ENCODE measurements at regions of chr10 and their contacts with region 1.

Region 1: GRCh38 chr10:21696302-21696701 is 162.3 kb downstream of the MLLT10 start:
- DNase-seq: no peak
- H3K4me3 ChIP-seq: no peak overlapping the region
- H3K4me3 Mint-ChIP-seq: no peak overlapping the region
- H3K27ac Mint-ChIP-seq: no peak overlapping the region
- H3K4me1 ChIP-seq: no peaks in the 10 kb centered on the region
- H3K4me1 Mint-ChIP-seq: no peaks in the 10 kb centered on the region
- H3K27me3 ChIP-seq: no peaks in the 10 kb centered on the region
- H3K27me3 Mint-ChIP-seq: no peaks in the 10 kb centered on the region
- CTCF ChIP-seq: no peak

Region 2: GRCh38 chr10:21776883-21777282 is 80.6 kb after region 1 on chr10:
- CTCF ChIA-PET with region 1: no interaction called
- POLR2A ChIA-PET with region 1: interaction called, 16 read pairs
- intact Hi-C with region 1: no loop called
- DNase-seq: no peak
- H3K4me3 ChIP-seq: no peak overlapping the region
- H3K4me3 Mint-ChIP-seq: no peak overlapping the region
- H3K27ac Mint-ChIP-seq: no peak overlapping the region
- H3K4me1 ChIP-seq: no peaks in the 10 kb centered on the region
- H3K4me1 Mint-ChIP-seq: no peaks in the 10 kb centered on the region
- H3K27me3 ChIP-seq: no peaks in the 10 kb centered on the region
- H3K27me3 Mint-ChIP-seq: no peaks in the 10 kb centered on the region
- CTCF ChIP-seq: no peak

Measured in Caco-2 (cell line).